Ascending aorta (tissue), 2 donors: ENCODE measurements at regions of chr11 and their contacts with region 1.

Region 1: GRCh38 chr11:3123761-3124733 is 41.1 kb downstream of the OSBPL5 start:
- DNase-seq: peak; percentile 84 to 98
- H3K4me3 ChIP-seq: no peak overlapping the region
- H3K27ac ChIP-seq: peak overlapping the region; percentile 84
- H3K4me1 ChIP-seq: peaks cover 18 to 19% of the 10 kb centered on the region in 2 donors
- H3K27me3 ChIP-seq: no peaks in the 10 kb centered on the region
- CTCF ChIP-seq: no peak

Region 2: GRCh38 chr11:2807025-2807681 is 316.9 kb before region 1 on chr11:
- intact Hi-C with region 1: no loop called
- DNase-seq: peak; percentile 9 to 80
- H3K4me3 ChIP-seq: peak overlapping the region; percentile 37 to 39
- H3K27ac ChIP-seq: no peak overlapping the region
- H3K4me1 ChIP-seq: peaks cover 0 to 13% of the 10 kb centered on the region in 2 donors
- H3K27me3 ChIP-seq: no peaks in the 10 kb centered on the region
- CTCF ChIP-seq: no peak

Region 3: DNA sequence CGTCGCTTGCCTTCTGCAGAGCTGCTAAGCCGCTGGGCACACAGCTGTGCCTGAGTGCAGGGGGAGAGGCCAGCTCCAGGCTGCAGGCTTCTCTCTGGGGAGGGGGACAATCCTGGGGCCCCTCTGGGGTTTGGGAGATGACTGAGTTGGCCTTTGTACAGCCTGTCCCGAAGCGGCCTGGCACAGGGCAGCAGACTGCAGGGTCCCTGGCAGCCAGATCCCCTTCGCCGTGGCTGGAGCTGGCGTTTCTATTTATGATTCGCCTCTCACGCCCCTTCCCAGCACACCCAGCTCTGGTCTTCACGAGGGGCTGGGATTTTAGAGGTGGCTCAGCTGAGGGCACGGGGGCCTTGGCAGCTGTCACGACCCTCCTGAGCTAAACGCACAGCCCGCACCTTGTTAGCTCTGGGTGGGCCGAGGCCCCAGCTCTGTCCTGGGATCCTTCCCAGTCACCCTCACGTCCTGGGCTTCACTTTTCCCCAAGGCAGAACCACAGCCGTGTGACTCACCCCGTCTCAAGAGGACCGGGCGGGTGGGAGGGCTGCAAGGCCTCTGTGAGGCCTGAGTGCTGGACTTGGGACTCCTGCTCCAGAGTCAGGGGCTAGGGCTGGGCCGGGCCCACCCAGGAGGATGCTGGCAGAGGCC is 22.7 kb after region 1 on chr11:
- intact Hi-C with region 1: loop called (anchors 1 kb)
- DNase-seq: peak in 1 of 2 donors; percentile 80
- H3K4me3 ChIP-seq: peak overlapping the region; percentile 16 to 39
- H3K27ac ChIP-seq: peak overlapping the region; percentile 82 to 86
- H3K4me1 ChIP-seq: peaks cover 26 to 43% of the 10 kb centered on the region in 2 donors
- H3K27me3 ChIP-seq: no peaks in the 10 kb centered on the region
- CTCF ChIP-seq: no peak